CD4-positive, alpha-beta memory T cell (primary cell): ENCODE measurements at regions of chr3 and their contacts with region 1.

Region 1: DNA sequence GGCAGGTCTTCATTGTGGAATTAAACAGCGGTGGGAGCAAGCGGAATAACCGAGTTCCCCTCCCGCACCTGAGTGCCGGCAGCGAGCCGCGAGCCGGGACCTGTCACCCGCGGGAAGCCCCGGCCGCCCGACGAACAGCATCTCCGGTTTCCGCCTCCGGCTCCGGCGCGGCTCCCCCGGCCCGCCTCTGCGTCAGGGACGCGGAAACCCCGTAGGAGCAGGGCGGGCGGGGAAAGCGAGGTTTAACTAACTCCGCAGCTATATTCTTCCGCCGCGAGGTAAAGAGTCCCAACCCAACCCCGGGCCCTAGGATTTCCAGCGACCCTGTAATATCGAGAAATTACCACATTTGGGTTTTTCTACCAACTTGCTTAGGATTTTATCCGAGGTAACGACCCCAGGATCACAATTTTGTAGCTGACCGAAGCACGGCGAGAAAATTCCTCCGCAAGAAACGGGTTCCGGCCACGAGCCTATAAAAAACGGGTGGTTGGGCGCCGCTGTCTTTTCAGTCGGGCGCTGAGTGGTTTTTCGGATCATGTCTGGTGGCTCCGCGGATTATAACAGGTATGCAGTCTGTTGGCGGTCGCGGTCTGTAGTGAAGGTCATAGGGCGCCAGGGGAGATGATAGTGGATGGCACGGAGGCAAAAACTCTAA is at the start of gene EIF4A2:
- DNase-seq: peak; percentile 91 to 93 (median 93)
- H3K4me3 ChIP-seq: peak within 1 kb of the TSS; percentile 86 to 97
- H3K4me3 Mint-ChIP-seq: peak within 1 kb of the TSS; percentile 95 to 100 (median 100)
- H3K27ac ChIP-seq: peak within 1 kb of the TSS; percentile 98
- H3K27ac Mint-ChIP-seq: peak within 1 kb of the TSS; percentile 97 to 100 (median 100)
- H3K4me1 ChIP-seq: peaks cover 38% of the 10 kb centered on the region
- H3K4me1 Mint-ChIP-seq: peaks cover 39 to 63% (median 46%) of the 10 kb centered on the region in 4 donors
- H3K27me3 ChIP-seq: no peaks in the 10 kb centered on the region
- H3K27me3 Mint-ChIP-seq: peaks cover 0 to 1% of the 10 kb centered on the region in 2 donors
- total RNA-seq, gene EIF4A2: 589 to 632 TPM

Region 2: DNA sequence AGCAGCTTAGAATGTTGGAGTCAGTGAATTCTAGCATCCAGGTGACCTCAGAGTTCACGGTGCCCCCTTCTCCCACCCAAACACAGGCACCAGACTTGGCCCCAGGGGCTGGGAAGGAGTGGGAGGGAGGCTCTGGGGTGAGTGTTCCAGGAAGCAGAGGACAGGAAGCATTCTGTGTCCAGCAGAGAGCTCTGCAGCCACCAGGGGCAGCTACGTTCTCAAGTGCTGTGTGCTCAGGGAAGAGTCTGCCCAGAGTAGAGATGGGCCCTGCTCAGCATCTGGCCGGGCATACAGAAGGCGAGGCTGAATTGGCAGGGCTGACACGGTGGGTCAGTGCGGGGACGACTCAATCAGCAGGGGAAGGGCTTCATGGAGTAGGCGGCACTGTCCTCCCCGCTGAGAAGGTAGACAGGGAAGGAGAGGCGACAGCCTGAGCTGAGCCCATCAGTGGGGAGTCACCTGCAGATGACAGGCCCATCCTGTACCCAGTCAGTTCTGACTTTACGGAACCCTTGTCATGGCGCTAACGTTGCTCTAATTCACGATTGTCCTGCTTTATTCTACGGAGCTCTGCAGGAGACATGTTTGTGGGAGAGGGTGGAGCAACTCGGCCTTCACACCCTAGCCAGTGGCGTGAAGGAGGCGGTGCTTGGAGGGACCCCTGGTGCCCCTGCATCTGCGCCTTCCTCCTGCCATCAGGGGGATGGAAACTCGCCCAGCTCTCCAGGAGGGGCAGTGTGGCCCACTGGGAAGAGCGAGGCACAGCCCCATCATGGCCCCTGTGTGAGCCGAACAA is 1712.5 kb before region 1 on chr3:
- CTCF ChIA-PET with region 1: no interaction called
- POLR2A ChIA-PET with region 1: no interaction called
- intact Hi-C with region 1: no loop called
- DNase-seq: no peak
- H3K4me3 ChIP-seq: no peak overlapping the region
- H3K4me3 Mint-ChIP-seq: no peak overlapping the region
- H3K27ac ChIP-seq: no peak overlapping the region
- H3K27ac Mint-ChIP-seq: peak overlapping the region in 1 of 7 donors; percentile 29
- H3K4me1 ChIP-seq: no peaks in the 10 kb centered on the region
- H3K4me1 Mint-ChIP-seq: no peaks in the 10 kb centered on the region
- H3K27me3 ChIP-seq: no peaks in the 10 kb centered on the region
- H3K27me3 Mint-ChIP-seq: peaks cover 2% of the 10 kb centered on the region in 2 donors

Region 3: DNA sequence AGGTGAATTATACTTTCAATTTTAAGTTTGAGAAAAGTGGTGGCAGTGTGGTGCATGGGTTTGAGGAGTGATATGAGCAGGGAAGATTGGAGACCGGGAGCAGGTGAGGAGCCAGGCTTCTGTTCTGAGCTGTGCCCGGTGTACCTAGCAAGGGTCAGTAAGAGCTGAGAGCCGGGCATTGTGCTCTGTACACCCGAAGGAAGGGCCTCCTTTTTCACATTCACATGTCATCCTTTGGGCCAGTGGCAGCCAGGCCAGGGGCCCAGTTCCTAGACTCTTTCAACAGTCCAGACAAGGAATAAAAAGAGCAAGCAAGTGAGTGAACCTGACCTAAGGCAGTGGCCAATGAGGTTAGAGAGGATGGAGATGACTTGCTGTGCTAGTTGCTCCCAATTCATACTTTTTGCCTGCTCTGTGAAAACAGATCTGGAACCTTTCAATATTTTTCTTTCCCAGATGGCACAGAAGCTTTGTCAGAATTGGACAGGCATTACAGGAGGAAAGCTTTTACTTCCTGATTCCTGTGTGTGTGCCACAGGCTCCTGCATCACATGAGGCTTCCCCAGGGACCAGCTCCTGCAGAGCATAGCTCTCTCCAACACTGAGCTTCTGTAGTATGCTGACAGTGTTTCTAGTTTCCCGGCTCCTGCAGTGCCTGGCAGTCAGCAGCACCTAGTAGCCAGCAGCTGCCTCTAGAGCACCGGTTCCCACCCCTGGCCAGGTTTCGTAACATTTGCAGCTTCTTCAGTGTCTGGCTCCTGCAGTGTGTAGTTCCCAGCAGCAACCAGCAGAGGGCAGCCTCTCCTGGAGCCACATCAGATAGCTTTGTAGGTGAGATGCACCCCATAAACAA is 840.1 kb before region 1 on chr3:
- CTCF ChIA-PET with region 1: no interaction called
- POLR2A ChIA-PET with region 1: interaction called, 68 read pairs
- intact Hi-C with region 1: loop called (anchors 2 kb)
- DNase-seq: peak; percentile 81 to 84 (median 83)
- H3K4me3 ChIP-seq: peak overlapping the region in 1 of 2 donors; percentile 55
- H3K4me3 Mint-ChIP-seq: peak overlapping the region; percentile 43 to 76 (median 66)
- H3K27ac ChIP-seq: no peak overlapping the region
- H3K27ac Mint-ChIP-seq: peak overlapping the region in 5 of 7 donors; percentile 32 to 75 (median 62)
- H3K4me1 ChIP-seq: peaks cover 14% of the 10 kb centered on the region
- H3K4me1 Mint-ChIP-seq: peaks cover 6 to 24% (median 14%) of the 10 kb centered on the region in 4 donors
- H3K27me3 ChIP-seq: no peaks in the 10 kb centered on the region
- H3K27me3 Mint-ChIP-seq: peaks cover 2 to 3% of the 10 kb centered on the region in 2 donors

Region 4: DNA sequence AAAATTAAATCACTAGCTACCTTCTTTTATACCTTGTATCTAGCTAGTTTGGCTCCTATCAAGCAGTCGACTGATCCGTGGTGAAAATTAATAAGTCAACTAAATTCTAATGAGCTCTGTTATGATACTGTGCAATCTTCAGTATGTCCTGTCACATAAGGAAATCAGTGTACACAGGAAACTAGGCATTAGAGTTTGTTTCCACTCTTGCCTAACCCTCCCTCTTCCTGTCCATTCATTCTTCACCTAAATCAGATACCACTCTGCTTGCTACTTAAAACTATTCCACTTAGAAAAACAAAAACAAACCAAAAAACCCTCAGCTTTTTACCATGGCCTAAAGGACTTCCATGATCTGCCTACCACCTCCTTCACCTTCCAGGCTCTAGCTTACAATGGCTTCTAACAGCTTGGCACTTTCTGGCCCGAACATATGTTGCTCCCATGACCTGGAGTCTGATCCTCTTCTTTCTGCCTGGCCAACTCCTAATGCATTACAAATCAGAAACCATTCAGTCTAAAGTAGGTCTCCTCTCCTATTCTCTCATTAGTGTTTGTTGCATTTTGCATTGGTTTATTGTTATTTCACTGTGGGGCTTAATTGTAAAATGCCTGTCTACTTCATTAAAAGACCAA is 15.2 kb after region 1 on chr3:
- CTCF ChIA-PET with region 1: interaction called, 13 read pairs
- POLR2A ChIA-PET with region 1: interaction called, 66 read pairs
- intact Hi-C with region 1: no loop called
- DNase-seq: no peak
- H3K4me3 ChIP-seq: no peak overlapping the region
- H3K4me3 Mint-ChIP-seq: no peak overlapping the region
- H3K27ac ChIP-seq: no peak overlapping the region
- H3K27ac Mint-ChIP-seq: peak overlapping the region in 4 of 7 donors; percentile 2 to 19 (median 7)
- H3K4me1 ChIP-seq: peaks cover 27% of the 10 kb centered on the region
- H3K4me1 Mint-ChIP-seq: peaks cover 11 to 20% (median 15%) of the 10 kb centered on the region in 4 donors
- H3K27me3 ChIP-seq: no peaks in the 10 kb centered on the region
- H3K27me3 Mint-ChIP-seq: no peaks in the 10 kb centered on the region

Region 5: GRCh38 chr3:186826976-186827731 is 44.0 kb after region 1 on chr3:
- CTCF ChIA-PET with region 1: interaction called, 8 read pairs
- POLR2A ChIA-PET with region 1: interaction called, 71 read pairs
- intact Hi-C with region 1: loop called (anchors 1 kb)
- DNase-seq: peak; percentile 81 to 89 (median 87)
- H3K4me3 ChIP-seq: peak overlapping the region in 1 of 2 donors; percentile 65
- H3K4me3 Mint-ChIP-seq: peak overlapping the region; percentile 65 to 93 (median 78)
- H3K27ac ChIP-seq: peak overlapping the region; percentile 47
- H3K27ac Mint-ChIP-seq: peak overlapping the region in 2 of 7 donors; percentile 18 to 28
- H3K4me1 ChIP-seq: peaks cover 25% of the 10 kb centered on the region
- H3K4me1 Mint-ChIP-seq: peaks cover 5 to 16% (median 12%) of the 10 kb centered on the region in 4 donors
- H3K27me3 ChIP-seq: peaks cover 21% of the 10 kb centered on the region
- H3K27me3 Mint-ChIP-seq: peaks cover 30 to 38% of the 10 kb centered on the region in 2 donors

Region 6: DNA sequence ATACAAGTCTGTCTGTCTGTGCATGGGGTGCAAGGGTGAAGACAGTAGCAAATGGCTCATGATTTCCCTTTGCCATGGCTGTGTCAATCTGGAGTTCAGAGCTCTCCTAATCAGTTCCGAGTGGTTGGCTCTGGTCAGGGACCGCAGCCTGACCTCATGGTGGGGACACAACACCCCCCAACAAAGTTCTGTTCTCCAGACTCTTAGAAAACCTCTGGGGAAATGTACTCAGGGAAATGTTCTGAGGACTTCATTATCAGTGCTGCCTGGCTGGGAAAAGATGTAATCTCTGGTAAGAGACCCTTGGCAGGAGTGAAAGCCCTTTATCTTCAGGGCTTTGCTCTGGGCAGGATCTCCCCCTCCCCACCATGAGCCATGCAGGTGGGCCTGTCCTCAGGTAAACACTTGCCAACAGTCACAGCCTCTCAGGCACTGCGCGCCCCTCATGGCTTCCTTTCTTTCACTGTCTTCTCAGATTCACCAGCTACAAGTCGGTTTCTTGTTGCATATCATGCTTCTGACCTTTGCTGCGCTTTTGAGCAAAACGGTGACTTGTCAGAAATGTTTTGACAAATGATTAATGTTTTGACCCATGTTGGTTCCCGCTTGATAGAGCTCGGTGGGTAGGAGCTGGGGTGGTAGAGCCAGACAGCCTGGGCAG is 242.6 kb after region 1 on chr3:
- CTCF ChIA-PET with region 1: no interaction called
- POLR2A ChIA-PET with region 1: interaction called, 37 read pairs
- intact Hi-C with region 1: loop called (anchors 5 kb)
- DNase-seq: peak in 3 of 5 donors; percentile 18 to 49 (median 35)
- H3K4me3 ChIP-seq: peak overlapping the region; percentile 57 to 89
- H3K4me3 Mint-ChIP-seq: peak overlapping the region; percentile 81 to 97 (median 92)
- H3K27ac ChIP-seq: peak overlapping the region; percentile 68
- H3K27ac Mint-ChIP-seq: peak overlapping the region; percentile 86 to 98 (median 92)
- H3K4me1 ChIP-seq: peaks cover 82% of the 10 kb centered on the region
- H3K4me1 Mint-ChIP-seq: peaks cover 48 to 80% (median 62%) of the 10 kb centered on the region in 4 donors
- H3K27me3 ChIP-seq: no peaks in the 10 kb centered on the region
- H3K27me3 Mint-ChIP-seq: no peaks in the 10 kb centered on the region

Region 7: GRCh38 chr3:188061133-188061532 is 1277.9 kb after region 1 on chr3:
- CTCF ChIA-PET with region 1: no interaction called
- POLR2A ChIA-PET with region 1: no interaction called
- intact Hi-C with region 1: no loop called
- DNase-seq: peak; percentile 50 to 78 (median 63)
- H3K4me3 ChIP-seq: no peak overlapping the region
- H3K4me3 Mint-ChIP-seq: peak overlapping the region in 2 of 8 donors; percentile 17 to 43
- H3K27ac ChIP-seq: no peak overlapping the region
- H3K27ac Mint-ChIP-seq: peak overlapping the region in 6 of 7 donors; percentile 71 to 95 (median 84)
- H3K4me1 ChIP-seq: peaks cover 12% of the 10 kb centered on the region
- H3K4me1 Mint-ChIP-seq: peaks cover 12 to 19% (median 14%) of the 10 kb centered on the region in 4 donors
- H3K27me3 ChIP-seq: no peaks in the 10 kb centered on the region
- H3K27me3 Mint-ChIP-seq: no peaks in the 10 kb centered on the region